AG04449 (cell line): ENCODE measurements at regions of chr1 and their contacts with region 1.

Region 1: DNA sequence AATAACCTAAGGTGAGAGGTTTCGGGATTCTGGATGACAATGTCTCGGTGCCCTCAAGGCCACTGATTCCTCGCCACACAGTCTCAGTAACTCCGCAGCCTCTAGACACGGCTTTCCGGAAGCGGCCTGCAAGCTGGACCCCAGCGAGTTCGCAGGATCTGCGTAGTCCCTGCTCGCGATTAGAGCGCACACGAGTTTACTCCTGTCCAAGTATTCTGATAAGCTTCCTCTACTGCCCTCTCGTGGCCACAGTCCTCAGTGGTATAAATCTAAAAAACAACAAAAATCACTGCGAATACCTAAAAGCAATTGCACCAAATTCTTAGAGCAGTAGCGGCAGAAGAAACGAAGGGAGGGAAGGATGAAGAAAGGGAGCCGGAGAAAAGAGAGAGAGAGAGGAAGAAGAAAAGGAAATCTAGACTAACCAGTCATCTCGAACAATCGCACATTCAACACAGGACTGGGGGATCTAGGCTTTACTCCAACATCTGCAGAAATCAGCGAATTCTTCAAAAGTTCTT is 1.1 kb upstream of the PLXNA2 start:
- DNase-seq: peak; percentile 59
- H3K4me3 ChIP-seq: peak overlapping the region; percentile 44
- CTCF ChIP-seq: peak; percentile 60

Region 2: GRCh38 chr1:207885129-207886032 is 359.9 kb before region 1 on chr1:
- CTCF ChIA-PET with region 1: interaction called, 13 read pairs
- POLR2A ChIA-PET with region 1: no interaction called
- DNase-seq: peak; percentile 37
- H3K4me3 ChIP-seq: no peak overlapping the region
- CTCF ChIP-seq: peak; percentile 92

Region 3: DNA sequence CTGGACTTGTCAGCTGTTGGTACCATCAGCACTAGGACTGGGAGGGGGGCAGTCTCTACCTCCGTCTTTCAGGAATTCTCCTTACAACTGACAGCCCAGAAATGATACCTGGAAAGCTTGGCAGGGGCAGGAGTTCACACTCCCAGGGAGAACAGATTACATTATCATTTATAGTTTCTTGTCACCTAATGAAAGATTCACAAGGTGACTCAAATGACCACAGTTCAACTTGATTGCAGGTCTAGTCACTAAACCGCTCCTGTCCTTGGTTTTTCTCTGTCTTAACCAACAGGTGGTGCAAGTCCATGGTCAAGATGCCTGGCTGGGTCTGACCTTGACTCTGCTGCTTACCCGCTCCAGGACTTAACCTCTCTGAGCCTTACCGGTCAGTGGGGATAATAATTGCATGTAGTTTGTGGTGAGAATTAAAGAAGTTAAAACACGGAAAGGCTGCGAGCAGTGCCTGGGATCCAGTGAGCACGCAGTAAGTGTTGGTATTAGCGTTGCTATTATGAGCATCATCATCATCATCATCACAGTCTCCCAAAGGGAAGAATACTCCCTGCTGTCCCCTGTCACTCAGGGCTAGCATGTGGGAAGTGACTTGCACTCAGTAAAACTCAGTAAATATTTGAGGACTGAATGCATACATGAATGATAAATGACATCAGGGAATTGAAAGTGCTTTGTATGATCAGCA is 209.0 kb before region 1 on chr1:
- CTCF ChIA-PET with region 1: interaction called, 990 read pairs
- POLR2A ChIA-PET with region 1: no interaction called
- DNase-seq: no peak
- H3K4me3 ChIP-seq: no peak overlapping the region
- CTCF ChIP-seq: peak; percentile 19

Region 4: DNA sequence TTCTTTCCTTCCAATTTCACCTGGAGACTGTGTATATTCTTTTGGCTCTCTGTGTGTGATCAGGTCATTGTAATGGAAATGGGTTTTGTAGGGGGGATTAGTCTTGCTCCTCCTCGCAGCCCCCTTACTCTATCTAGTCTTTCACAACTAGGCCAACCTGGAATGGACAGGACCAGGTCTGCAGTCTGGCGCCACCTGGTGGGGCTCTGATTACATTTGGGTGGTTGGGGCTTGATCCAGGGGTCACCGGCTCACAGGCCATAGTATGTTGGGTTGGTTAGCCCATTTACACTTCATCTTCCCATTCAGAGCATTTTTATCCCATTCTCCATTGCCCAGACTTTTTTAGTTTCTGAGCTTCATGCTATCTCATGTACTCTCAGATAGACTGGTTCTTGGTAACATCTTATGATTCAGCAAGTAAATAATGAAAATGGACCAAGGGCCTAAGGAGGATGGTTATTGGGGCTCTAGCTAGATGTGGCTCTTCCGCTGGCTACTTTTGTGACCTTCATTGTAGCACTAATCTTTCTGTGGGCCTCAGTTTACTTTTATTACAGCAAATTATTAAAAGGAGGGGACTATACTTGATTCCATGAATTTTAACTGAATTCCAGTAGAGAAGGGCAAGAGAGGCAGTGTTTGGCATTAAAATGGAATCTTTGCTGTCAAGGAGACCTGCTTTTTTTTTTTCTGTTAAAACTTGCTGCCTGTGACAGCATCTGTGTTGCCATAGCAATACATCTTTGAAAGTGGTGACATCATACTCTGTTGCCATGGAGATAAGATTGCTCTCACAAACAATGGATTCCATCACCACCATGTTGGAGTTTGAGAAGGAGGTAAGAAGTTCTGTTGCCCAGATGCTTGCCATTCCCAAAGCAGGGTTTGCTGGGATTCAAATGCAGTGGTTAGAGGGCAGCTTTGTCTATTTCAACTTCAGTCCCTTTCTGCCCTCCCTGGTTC is 151.2 kb before region 1 on chr1:
- CTCF ChIA-PET with region 1: interaction called, 186 read pairs
- POLR2A ChIA-PET with region 1: no interaction called
- DNase-seq: no peak
- H3K4me3 ChIP-seq: no peak overlapping the region
- CTCF ChIP-seq: peak; percentile 77

Region 5: DNA sequence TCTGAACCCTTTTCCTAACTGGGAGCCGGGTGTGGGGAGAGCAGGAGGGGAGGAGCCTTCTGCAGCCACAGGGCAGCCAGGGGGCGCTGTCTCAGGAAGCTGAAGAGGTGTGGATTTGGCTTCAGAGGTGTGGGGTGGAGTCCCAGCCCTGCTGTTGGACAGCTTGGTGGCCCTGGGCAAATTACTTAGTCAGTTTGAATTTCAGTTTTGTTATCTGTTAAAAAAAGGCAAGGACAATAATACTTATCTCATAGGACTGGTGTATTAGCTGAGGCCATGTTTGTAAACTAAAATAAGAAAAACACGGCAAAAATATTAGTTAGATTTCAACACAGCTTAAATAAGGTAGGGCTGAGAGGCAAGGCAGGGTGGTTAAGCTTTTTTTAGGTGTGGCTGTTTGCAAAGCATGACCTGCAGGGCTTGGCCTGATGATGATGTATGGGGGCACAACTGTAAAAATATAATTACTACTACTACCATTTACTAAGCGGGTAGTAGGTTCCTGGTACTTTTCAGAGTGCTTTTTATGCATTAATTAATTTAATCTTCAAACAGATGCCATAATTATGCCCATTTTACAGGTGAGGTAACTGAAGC is 112.9 kb before region 1 on chr1:
- CTCF ChIA-PET with region 1: interaction called, 242 read pairs
- POLR2A ChIA-PET with region 1: no interaction called
- DNase-seq: no peak
- H3K4me3 ChIP-seq: no peak overlapping the region
- CTCF ChIP-seq: peak; percentile 88

Region 6: DNA sequence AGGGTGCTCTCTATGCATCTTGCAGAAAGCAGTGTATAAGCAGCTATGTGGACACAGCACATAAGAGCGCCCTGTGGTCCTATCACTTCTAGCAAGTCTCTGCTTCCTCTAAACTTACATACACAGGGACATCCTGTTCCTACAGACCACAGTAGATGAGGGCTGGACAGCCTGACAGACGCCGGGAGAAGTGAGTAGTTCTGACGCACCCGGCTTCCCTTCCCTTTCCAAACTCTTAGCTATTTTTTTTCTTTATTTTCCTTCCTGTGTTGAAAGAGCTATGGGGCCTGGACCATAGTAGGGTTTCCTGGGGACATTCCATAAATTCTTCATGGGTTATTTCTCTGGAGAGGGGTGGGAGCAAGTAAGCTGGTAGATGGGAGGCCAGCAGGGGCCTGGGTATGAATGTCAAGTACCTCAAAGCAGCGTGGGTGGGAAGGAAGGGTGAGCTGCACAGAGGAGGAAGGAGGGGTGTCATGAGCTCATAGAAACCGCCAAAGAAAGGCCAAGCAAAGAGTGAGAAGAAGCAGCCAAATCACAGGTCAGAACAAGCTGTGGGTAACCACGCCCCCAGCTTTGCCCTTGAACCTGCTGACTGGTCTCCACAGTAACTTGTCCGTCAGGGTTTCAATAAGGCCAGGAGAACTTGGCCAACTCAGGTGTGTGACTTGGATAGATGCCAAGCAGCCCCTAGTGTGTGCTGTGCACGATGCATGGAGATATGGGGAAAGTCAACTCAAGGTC is 37.7 kb before region 1 on chr1:
- CTCF ChIA-PET with region 1: interaction called, 469 read pairs
- POLR2A ChIA-PET with region 1: no interaction called
- DNase-seq: peak; percentile 85
- H3K4me3 ChIP-seq: no peak overlapping the region
- CTCF ChIP-seq: no peak

Region 7: DNA sequence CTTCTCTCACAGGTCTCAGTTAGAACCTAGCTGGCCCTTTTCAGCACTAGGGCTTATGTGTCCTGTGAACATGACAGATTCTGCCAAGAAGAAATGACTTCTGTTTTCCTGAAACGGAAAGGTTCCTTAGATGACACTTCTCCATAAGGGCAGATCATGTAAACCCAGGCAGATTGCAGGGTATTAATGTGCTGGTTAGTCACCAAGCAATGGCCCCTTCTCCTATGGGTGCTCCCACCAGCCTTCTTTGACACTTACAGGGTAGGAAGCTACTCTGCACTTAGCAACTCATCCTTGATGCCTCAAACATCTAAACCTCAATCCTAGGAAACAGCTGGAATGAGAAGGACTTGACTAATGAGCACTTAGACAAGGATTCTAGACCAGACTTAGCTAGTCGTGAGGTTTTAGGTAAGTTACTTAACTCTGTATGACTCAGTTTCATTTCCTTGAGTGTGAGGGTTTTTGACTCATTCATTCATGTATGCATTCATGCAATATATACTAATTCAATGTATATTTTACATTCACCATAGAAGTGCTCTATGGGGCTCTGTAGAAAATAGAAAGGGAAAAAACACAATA is 73.0 kb after region 1 on chr1:
- CTCF ChIA-PET with region 1: no interaction called
- POLR2A ChIA-PET with region 1: no interaction called
- DNase-seq: no peak
- H3K4me3 ChIP-seq: no peak overlapping the region
- CTCF ChIP-seq: no peak